A549 (cell line): ENCODE measurements at regions of chr3 and their contacts with region 1.

Region 1: GRCh38 chr3:57100046-57100695 is 39.7 kb downstream of the SPATA12 start:
- DNase-seq: peak; percentile 33 to 60
- ATAC-seq: peak; percentile 76 to 91
- H3K4me3 ChIP-seq: no peak overlapping the region
- H3K27ac ChIP-seq: no peak overlapping the region
- H3K4me1 ChIP-seq: no peaks in the 10 kb centered on the region
- CTCF ChIP-seq: peak; percentile 76
- EP300 ChIP-seq: no peak
- POLR2A ChIP-seq: no peak
- RAD21 ChIP-seq: peak; percentile 81 to 85

Region 2: GRCh38 chr3:57019057-57019456 is 81.1 kb before region 1 on chr3:
- CTCF ChIA-PET with region 1: no interaction called
- POLR2A ChIA-PET with region 1: no interaction called
- DNase-seq: no peak
- ATAC-seq: no peak
- H3K4me3 ChIP-seq: no peak overlapping the region
- H3K27ac ChIP-seq: no peak overlapping the region
- H3K4me1 ChIP-seq: peaks cover 25% of the 10 kb centered on the region
- CTCF ChIP-seq: no peak
- EP300 ChIP-seq: no peak
- POLR2A ChIP-seq: no peak
- RAD21 ChIP-seq: no peak

Region 3: GRCh38 chr3:57086201-57086600 is 14.0 kb before region 1 on chr3:
- CTCF ChIA-PET with region 1: interaction called, 32 read pairs
- POLR2A ChIA-PET with region 1: no interaction called
- DNase-seq: no peak
- ATAC-seq: no peak
- H3K4me3 ChIP-seq: no peak overlapping the region
- H3K27ac ChIP-seq: no peak overlapping the region
- H3K4me1 ChIP-seq: no peaks in the 10 kb centered on the region
- CTCF ChIP-seq: no peak
- EP300 ChIP-seq: no peak
- POLR2A ChIP-seq: no peak
- RAD21 ChIP-seq: no peak

Region 4: GRCh38 chr3:57112206-57112605 is 12.0 kb after region 1 on chr3:
- CTCF ChIA-PET with region 1: interaction called, 27 read pairs
- POLR2A ChIA-PET with region 1: no interaction called
- DNase-seq: peak; percentile 15 to 23
- ATAC-seq: peak in 1 of 2 experiments; percentile 62; a peak in 2 of 6 replicates
- H3K4me3 ChIP-seq: no peak overlapping the region
- H3K27ac ChIP-seq: no peak overlapping the region
- H3K4me1 ChIP-seq: no peaks in the 10 kb centered on the region; the same call in 2 of the 3 replicates
- CTCF ChIP-seq: no peak
- EP300 ChIP-seq: no peak
- POLR2A ChIP-seq: no peak
- RAD21 ChIP-seq: no peak

Region 5: GRCh38 chr3:57221883-57222282 is 121.7 kb after region 1 on chr3:
- CTCF ChIA-PET with region 1: interaction called, 14 read pairs
- POLR2A ChIA-PET with region 1: no interaction called
- DNase-seq: peak in 1 of 2 experiments; percentile 20
- ATAC-seq: peak in 1 of 2 experiments; percentile 67; a peak in 3 of 6 replicates
- H3K4me3 ChIP-seq: no peak overlapping the region
- H3K27ac ChIP-seq: no peak overlapping the region
- H3K4me1 ChIP-seq: peaks cover 8% of the 10 kb centered on the region; the same call in 1 of the 3 replicates
- CTCF ChIP-seq: peak; percentile 47
- EP300 ChIP-seq: no peak
- POLR2A ChIP-seq: no peak
- RAD21 ChIP-seq: peak; percentile 53 to 65